ENCODE measurements at regions of chr9 and their contacts with region 1.

Region 1: GRCh38 chr9:92234514-92234913 is 59.0 kb downstream of the IARS1 start:
- DNase-seq: no peak
- H3K4me3 Mint-ChIP-seq: no peak overlapping the region
- H3K27ac Mint-ChIP-seq: no peak overlapping the region
- H3K4me1 Mint-ChIP-seq: peaks cover 2% of the 10 kb centered on the region
- H3K27me3 Mint-ChIP-seq: no peaks in the 10 kb centered on the region

Region 2: DNA sequence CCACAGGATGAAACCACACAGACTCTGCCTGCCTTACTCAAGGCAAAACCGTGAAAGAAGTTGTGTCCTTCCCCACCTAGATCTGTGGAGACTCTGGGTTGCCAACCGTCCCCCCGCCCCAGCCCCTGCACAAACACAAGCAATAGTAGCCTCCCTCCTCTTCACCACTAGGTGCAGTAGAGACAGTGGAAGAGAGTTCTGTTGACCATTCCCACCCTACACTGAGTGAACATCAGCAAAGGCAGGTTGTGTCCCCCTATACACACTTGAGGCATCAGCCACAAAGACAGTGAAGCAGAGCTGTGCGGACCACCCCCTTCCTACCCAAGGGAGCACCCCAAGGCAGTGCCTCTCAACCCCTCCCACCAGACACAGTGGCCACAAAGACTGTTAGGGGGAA is 587.1 kb before region 1 on chr9:
- intact Hi-C with region 1: no loop called
- DNase-seq: no peak
- H3K4me3 Mint-ChIP-seq: no peak overlapping the region
- H3K27ac Mint-ChIP-seq: no peak overlapping the region
- H3K4me1 Mint-ChIP-seq: peaks cover 2% of the 10 kb centered on the region
- H3K27me3 Mint-ChIP-seq: peaks cover 15% of the 10 kb centered on the region

Region 3: GRCh38 chr9:92133949-92134604 is 100.4 kb before region 1 on chr9:
- intact Hi-C with region 1: loop called (anchors 10 kb)
- DNase-seq: peak; percentile 93
- H3K4me3 Mint-ChIP-seq: peak overlapping the region; percentile 64
- H3K27ac Mint-ChIP-seq: no peak overlapping the region
- H3K4me1 Mint-ChIP-seq: peaks cover 5% of the 10 kb centered on the region
- H3K27me3 Mint-ChIP-seq: peaks cover 30% of the 10 kb centered on the region

Measured in activated CD4-positive, alpha-beta T cell treated with anti-CD3 and anti-CD28 coated beads, Interleukin-2, amount 10 ng/mL, durations not matched to agents 24 days and 14 days (primary cell).